Spleen (tissue), 13 donors: ENCODE measurements at regions of chr15 and their contacts with region 1.

Region 1: GRCh38 chr15:77118882-77119321 is 48.0 kb upstream of the TSPAN3 start:
- DNase-seq: no peak
- H3K4me3 ChIP-seq: no peak overlapping the region
- H3K27ac ChIP-seq: peak overlapping the region in 5 of 8 donors; percentile 21 to 51 (median 40)
- H3K4me1 ChIP-seq: peaks cover 0 to 46% (median 36%) of the 10 kb centered on the region in 6 donors
- H3K27me3 ChIP-seq: no peaks in the 10 kb centered on the region
- CTCF ChIP-seq: peak; percentile 44 to 82 (median 63)
- POLR2A ChIP-seq: no peak

Region 2: DNA sequence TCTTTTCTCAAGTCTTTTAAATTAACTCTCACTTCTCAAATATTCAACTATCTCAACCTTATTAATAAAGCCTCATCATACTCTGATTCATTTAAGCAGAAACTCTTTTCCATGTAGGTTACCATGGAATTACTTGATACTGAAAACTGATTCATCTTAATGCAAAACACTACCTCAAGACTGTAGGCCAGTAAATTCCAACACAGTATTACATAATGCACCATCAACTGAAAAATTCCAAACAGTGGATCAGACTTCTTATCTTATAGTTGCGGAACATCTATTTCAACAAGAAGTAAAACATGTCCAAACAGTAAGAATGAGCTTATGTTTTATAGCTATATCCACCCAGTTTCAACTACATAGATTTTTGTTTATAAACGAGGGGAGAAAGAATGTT is 176.5 kb after region 1 on chr15:
- intact Hi-C with region 1: no loop called
- DNase-seq: no peak
- H3K4me3 ChIP-seq: no peak overlapping the region
- H3K27ac ChIP-seq: no peak overlapping the region
- H3K4me1 ChIP-seq: no peaks in the 10 kb centered on the region
- H3K27me3 ChIP-seq: no peaks in the 10 kb centered on the region
- CTCF ChIP-seq: no peak
- POLR2A ChIP-seq: no peak

Region 3: GRCh38 chr15:77496710-77497103 is 377.8 kb after region 1 on chr15:
- intact Hi-C with region 1: loop called (anchors 5 kb)
- DNase-seq: peak; percentile 92
- H3K4me3 ChIP-seq: no peak overlapping the region
- H3K27ac ChIP-seq: peak overlapping the region in 7 of 8 donors; percentile 67 to 86 (median 80)
- H3K4me1 ChIP-seq: peaks cover 24 to 74% (median 54%) of the 10 kb centered on the region in 6 donors
- H3K27me3 ChIP-seq: no peaks in the 10 kb centered on the region
- CTCF ChIP-seq: peak; percentile 72 to 93 (median 87)
- POLR2A ChIP-seq: no peak

Region 4: DNA sequence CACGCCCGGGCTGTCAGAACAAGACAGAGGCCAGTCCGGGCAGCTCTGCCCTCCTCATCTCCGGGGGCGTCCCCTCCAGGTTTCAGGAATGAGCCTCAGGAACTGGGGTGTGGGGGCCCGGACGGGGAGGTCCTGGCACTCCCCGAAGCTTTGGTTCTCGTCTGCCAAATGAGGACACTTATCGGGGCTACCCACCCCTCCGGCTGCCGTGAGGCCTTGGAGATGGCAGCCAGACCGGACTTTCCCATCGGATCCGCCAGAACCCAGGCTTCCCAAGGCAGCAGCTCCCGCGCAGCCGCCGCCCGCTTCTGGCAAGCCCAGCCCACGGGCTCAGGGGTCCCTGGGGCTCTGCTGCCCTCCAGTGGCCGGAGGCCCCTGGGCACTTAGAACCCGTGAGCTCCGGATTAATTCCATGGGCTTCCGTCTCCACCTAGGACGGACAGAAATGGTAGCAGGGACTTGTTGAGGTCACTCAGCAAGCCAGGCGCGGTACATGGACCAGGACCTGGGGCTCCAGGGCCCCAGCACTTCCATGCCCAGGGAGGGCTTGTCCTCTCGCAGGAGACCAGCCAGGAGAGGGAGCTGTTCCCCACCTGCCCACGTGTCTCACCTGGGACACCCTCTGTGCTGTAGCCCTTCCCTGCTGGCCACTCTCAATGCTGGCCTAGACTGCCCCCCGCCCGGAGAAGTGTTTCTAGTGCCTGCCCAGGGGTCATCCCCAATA is 424.4 kb after region 1 on chr15:
- intact Hi-C with region 1: loop called (anchors 5 kb)
- DNase-seq: peak; percentile 95
- H3K4me3 ChIP-seq: peak overlapping the region; percentile 15 to 70 (median 36)
- H3K27ac ChIP-seq: peak overlapping the region in 7 of 8 donors; percentile 1 to 80 (median 70)
- H3K4me1 ChIP-seq: peaks cover 10 to 66% (median 37%) of the 10 kb centered on the region in 6 donors
- H3K27me3 ChIP-seq: no peaks in the 10 kb centered on the region
- CTCF ChIP-seq: peak; percentile 95 to 99 (median 97)
- POLR2A ChIP-seq: no peak